K562 (cell line): ENCODE measurements at regions of chrX and their contacts with region 1.

Region 1: DNA sequence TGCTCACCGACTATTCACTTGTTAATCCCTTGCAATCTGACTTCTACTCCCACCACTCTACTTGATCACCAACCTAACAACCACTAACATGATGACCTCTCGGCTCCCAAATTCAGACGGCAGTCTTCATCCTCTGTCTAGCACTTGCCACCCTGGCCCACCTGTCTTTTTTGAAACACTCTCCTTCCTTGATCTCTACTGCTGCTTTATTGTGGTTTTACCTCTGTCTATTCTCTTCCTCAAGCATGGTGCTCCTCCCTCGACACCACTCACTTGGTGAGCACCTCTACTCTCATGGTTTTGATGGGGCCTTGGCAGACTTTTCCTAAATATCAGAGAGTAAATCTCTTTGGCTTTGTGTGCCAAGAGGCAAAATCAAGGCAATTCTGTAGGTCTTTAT is 21.7 kb upstream of the CXCR3 start:
- DNase-seq: no peak
- ATAC-seq: no peak
- H3K4me3 ChIP-seq: no peak overlapping the region
- H3K27ac ChIP-seq: no peak overlapping the region
- H3K4me1 ChIP-seq: no peaks in the 10 kb centered on the region; a peak in 2 of 5 replicates
- H3K27me3 ChIP-seq: no peaks in the 10 kb centered on the region
- CTCF ChIP-seq: no peak
- EP300 ChIP-seq: no peak
- POLR2A ChIP-seq: no peak
- RAD21 ChIP-seq: no peak

Region 2: GRCh38 chrX:70970482-70970995 is 669.5 kb before region 1 on chrX:
- CTCF ChIA-PET with region 1: no interaction called
- POLR2A ChIA-PET with region 1: no interaction called
- in situ Hi-C with region 1: no loop called
- intact Hi-C with region 1: loop called (anchors 10 kb)
- DNase-seq: peak; percentile 11 to 35 (median 18)
- ATAC-seq: peak; percentile 77
- H3K4me3 ChIP-seq: no peak overlapping the region; the same call in 1 of the 2 replicates
- H3K27ac ChIP-seq: no peak overlapping the region; the same call in 2 of the 3 replicates
- H3K4me1 ChIP-seq: peaks cover 4 to 6% of the 10 kb centered on the region in 2 experiments; a peak in 2 of 5 replicates
- H3K27me3 ChIP-seq: no peaks in the 10 kb centered on the region
- CTCF ChIP-seq: peak; percentile 29 to 57 (median 31); a peak in 4 of 6 replicates
- EP300 ChIP-seq: no peak
- POLR2A ChIP-seq: no peak
- RAD21 ChIP-seq: peak; percentile 39 to 65

Region 3: GRCh38 chrX:71365876-71366673 is 273.9 kb before region 1 on chrX and contains the start of gene TAF1:
- CTCF ChIA-PET with region 1: no interaction called
- POLR2A ChIA-PET with region 1: no interaction called
- in situ Hi-C with region 1: no loop called
- intact Hi-C with region 1: no loop called
- DNase-seq: peak; percentile 92 to 97 (median 94)
- ATAC-seq: peak; percentile 91
- H3K4me3 ChIP-seq: peak within 1 kb of the TSS; percentile 83
- H3K27ac ChIP-seq: peak within 1 kb of the TSS; percentile 99
- H3K4me1 ChIP-seq: peaks cover 11 to 12% of the 10 kb centered on the region in 2 experiments; a peak in 4 of 5 replicates
- H3K27me3 ChIP-seq: no peaks in the 10 kb centered on the region
- CTCF ChIP-seq: no peak
- EP300 ChIP-seq: peak; percentile 60
- POLR2A ChIP-seq: 0 out of 2 replicates have a peak, but pooled peaks have one; percentile 5
- RAD21 ChIP-seq: no peak
- polyA plus RNA-seq, gene TAF1: 6.4 to 10.5 TPM

Region 4: DNA sequence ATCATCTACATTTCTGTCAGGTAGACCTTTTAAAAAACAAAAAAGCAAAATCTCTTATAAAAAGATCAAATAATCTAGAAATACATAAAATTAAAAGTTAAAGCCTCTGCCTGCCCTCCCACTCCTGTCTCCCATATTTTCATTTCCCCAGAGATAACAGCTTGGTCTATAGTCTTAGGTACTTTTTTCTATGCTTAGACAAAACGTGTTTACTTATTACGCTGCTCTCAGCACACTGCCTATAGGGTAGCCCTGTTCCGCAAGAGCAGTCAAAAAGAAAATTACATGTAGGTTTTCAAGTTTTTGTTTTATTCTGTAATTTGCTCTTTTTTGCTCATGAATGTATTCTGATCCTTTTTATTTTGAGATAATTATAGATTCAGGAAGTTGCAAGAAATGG is 200.6 kb before region 1 on chrX:
- CTCF ChIA-PET with region 1: no interaction called
- POLR2A ChIA-PET with region 1: no interaction called
- in situ Hi-C with region 1: no loop called
- intact Hi-C with region 1: no loop called
- DNase-seq: no peak
- ATAC-seq: peak; percentile 62; the same call in 2 of the 3 replicates
- H3K4me3 ChIP-seq: no peak overlapping the region
- H3K27ac ChIP-seq: peak overlapping the region; percentile 46; the same call in 2 of the 3 replicates
- H3K4me1 ChIP-seq: peaks cover 6 to 9% of the 10 kb centered on the region in 2 experiments; a peak in 2 of 5 replicates
- H3K27me3 ChIP-seq: no peaks in the 10 kb centered on the region
- CTCF ChIP-seq: no peak
- EP300 ChIP-seq: no peak
- POLR2A ChIP-seq: no peak
- RAD21 ChIP-seq: no peak

Region 5: GRCh38 chrX:71618303-71618721 is 21.7 kb before region 1 on chrX and contains the start of gene CXCR3:
- CTCF ChIA-PET with region 1: no interaction called
- POLR2A ChIA-PET with region 1: no interaction called
- in situ Hi-C with region 1: no loop called
- intact Hi-C with region 1: no loop called
- DNase-seq: no peak
- ATAC-seq: no peak
- H3K4me3 ChIP-seq: no peak within 1 kb of the TSS
- H3K27ac ChIP-seq: no peak within 1 kb of the TSS
- H3K4me1 ChIP-seq: peaks cover 0 to 18% of the 10 kb centered on the region in 2 experiments; a peak in 2 of 5 replicates
- H3K27me3 ChIP-seq: peaks cover 0 to 16% of the 10 kb centered on the region in 2 experiments; a peak in 3 of 5 replicates
- CTCF ChIP-seq: no peak
- EP300 ChIP-seq: no peak
- POLR2A ChIP-seq: no peak
- RAD21 ChIP-seq: no peak
- polyA plus RNA-seq, gene CXCR3: not detected

Region 6: GRCh38 chrX:71828086-71828485 is 188.1 kb after region 1 on chrX:
- CTCF ChIA-PET with region 1: no interaction called
- POLR2A ChIA-PET with region 1: no interaction called
- in situ Hi-C with region 1: no loop called
- intact Hi-C with region 1: no loop called
- DNase-seq: no peak
- ATAC-seq: no peak
- H3K4me3 ChIP-seq: no peak overlapping the region
- H3K27ac ChIP-seq: no peak overlapping the region
- H3K4me1 ChIP-seq: no peaks in the 10 kb centered on the region
- H3K27me3 ChIP-seq: peaks cover 0 to 17% of the 10 kb centered on the region in 2 experiments; a peak in 2 of 5 replicates
- CTCF ChIP-seq: no peak
- EP300 ChIP-seq: no peak
- POLR2A ChIP-seq: no peak
- RAD21 ChIP-seq: no peak